H1 (cell line): ENCODE measurements at regions of chr10 and their contacts with region 1.

Region 1: GRCh38 chr10:25080880-25081581 is 64.6 kb downstream of the THNSL1 start:
- DNase-seq: peak; percentile 76 to 84
- H3K4me3 ChIP-seq: no peak overlapping the region
- H3K27ac ChIP-seq: no peak overlapping the region
- H3K4me1 ChIP-seq: peaks cover 0 to 5% (median 3%) of the 10 kb centered on the region in 4 experiments; a peak in 3 of 7 replicates
- H3K27me3 ChIP-seq: no peaks in the 10 kb centered on the region
- CTCF ChIP-seq: peak; percentile 68 to 88 (median 86)
- EP300 ChIP-seq: no peak
- POLR2A ChIP-seq: no peak
- RAD21 ChIP-seq: peak; percentile 94 to 96

Region 2: GRCh38 chr10:25023278-25023677 is 57.8 kb before region 1 on chr10:
- CTCF ChIA-PET with region 1: interaction called, 10 read pairs
- POLR2A ChIA-PET with region 1: no interaction called
- DNase-seq: no peak
- H3K4me3 ChIP-seq: no peak overlapping the region
- H3K27ac ChIP-seq: no peak overlapping the region
- H3K4me1 ChIP-seq: no peaks in the 10 kb centered on the region
- H3K27me3 ChIP-seq: no peaks in the 10 kb centered on the region
- CTCF ChIP-seq: no peak
- EP300 ChIP-seq: no peak
- POLR2A ChIP-seq: no peak
- RAD21 ChIP-seq: no peak